ENCODE measurements at regions of chr11 and their contacts with region 1.

Region 1: GRCh38 chr11:70191495-70192140 is 11.5 kb upstream of the FADD start:
- DNase-seq: peak; percentile 84
- ATAC-seq: peak; percentile 89
- H3K4me3 Mint-ChIP-seq: no peak overlapping the region
- H3K27ac Mint-ChIP-seq: no peak overlapping the region
- H3K4me1 Mint-ChIP-seq: no peaks in the 10 kb centered on the region
- H3K27me3 Mint-ChIP-seq: peaks cover 9% of the 10 kb centered on the region

Region 2: DNA sequence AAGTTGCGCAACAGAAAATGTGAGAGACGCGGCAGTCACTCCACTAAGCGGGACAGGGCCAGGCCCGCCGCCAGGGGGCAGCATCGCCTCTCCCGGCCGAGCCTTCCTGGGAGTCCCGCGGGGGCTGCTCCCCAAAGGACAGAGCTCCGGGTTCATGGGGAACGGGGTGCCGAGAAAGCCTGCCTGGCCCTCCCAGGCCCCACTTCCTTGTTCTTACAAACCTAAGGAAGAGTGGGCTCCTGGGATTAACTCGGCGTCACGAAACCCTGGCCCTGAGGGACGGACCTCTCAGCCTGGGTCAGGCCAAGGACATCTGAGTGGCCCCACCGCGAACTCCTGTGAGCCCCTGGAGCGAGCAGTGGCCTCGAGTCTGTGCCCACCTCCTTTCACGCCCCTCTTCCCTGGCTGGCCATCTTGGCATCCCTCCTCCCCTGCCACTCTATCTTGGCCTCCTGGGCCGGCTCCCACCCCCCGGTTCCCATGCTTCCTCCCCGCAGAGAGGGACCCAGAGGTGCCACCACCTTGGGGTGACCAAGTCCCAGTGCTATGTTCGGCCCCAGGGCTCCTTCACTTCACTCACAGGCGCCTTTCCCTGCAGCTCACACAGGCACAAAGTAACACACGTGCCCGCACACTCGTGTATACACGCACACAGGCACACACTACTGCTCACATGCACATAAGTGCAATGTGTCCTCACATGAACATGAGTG is 272.5 kb before region 1 on chr11:
- CTCF ChIA-PET with region 1: interaction called, 7 read pairs
- POLR2A ChIA-PET with region 1: no interaction called
- intact Hi-C with region 1: loop called (anchors 1 to 2 kb)
- DNase-seq: peak; percentile 85
- ATAC-seq: peak; percentile 71
- H3K4me3 Mint-ChIP-seq: no peak overlapping the region
- H3K27ac Mint-ChIP-seq: no peak overlapping the region
- H3K4me1 Mint-ChIP-seq: peaks cover 2% of the 10 kb centered on the region
- H3K27me3 Mint-ChIP-seq: peaks cover 27% of the 10 kb centered on the region

Region 3: DNA sequence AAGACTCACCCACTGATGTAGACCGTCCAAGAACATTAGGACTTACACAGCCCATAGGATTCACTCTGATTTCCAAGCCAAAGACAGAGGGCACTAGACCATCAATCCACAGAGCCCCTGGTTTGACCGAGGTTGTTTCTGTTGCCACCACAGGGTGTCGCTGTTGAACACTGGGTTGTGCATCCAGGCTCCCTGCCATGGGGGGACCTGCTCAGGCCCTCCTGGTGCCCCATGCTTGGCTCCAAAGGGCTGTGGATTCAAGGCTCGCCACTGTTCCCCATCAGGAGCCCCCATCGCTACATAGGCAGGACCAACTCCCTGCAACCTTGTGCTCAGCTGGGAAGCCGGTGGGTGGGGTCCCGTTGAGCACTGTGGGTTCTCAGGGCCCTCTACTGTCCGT is 241.5 kb before region 1 on chr11:
- CTCF ChIA-PET with region 1: interaction called, 5 read pairs
- POLR2A ChIA-PET with region 1: no interaction called
- intact Hi-C with region 1: loop called in 1 of 2 experiments (anchors 1 kb)
- DNase-seq: peak; percentile 69
- ATAC-seq: peak; percentile 52
- H3K4me3 Mint-ChIP-seq: no peak overlapping the region
- H3K27ac Mint-ChIP-seq: no peak overlapping the region
- H3K4me1 Mint-ChIP-seq: no peaks in the 10 kb centered on the region
- H3K27me3 Mint-ChIP-seq: peaks cover 2% of the 10 kb centered on the region

Measured in activated CD4-positive, alpha-beta T cell treated with anti-CD3 and anti-CD28 coated beads for 36 hours (primary cell).